ENCODE measurements at regions of chr17 and their contacts with region 1.

Region 1: DNA sequence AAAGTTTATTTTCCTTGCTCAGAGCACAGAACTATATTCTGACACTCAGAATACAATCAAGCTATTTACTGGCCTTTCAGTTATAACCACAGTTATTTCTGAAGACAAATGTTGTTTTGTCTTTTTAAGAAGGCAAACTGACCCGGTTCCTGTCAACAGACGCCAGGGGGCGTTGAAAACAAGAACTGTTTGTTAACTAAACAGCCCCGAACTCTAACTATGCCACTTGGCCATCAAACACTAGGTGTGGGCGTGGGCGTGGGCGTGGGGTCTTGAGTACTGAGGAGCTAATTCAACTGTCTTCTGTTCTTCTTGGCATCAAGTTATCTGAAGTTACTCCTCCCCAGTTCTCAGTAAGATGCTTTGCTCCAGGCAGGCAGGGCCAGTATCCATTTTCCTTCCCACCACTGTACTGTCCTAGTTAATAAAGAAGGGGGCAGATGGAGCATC is 63.2 kb upstream of the MTMR4 start:
- H3K4me3 ChIP-seq: no peak overlapping the region
- H3K27ac ChIP-seq: no peak overlapping the region
- H3K4me1 ChIP-seq: peaks cover 3% of the 10 kb centered on the region; the same call in 1 of the 2 replicates
- CTCF ChIP-seq: peak; percentile 52; the same call in 1 of the 2 replicates

Region 2: DNA sequence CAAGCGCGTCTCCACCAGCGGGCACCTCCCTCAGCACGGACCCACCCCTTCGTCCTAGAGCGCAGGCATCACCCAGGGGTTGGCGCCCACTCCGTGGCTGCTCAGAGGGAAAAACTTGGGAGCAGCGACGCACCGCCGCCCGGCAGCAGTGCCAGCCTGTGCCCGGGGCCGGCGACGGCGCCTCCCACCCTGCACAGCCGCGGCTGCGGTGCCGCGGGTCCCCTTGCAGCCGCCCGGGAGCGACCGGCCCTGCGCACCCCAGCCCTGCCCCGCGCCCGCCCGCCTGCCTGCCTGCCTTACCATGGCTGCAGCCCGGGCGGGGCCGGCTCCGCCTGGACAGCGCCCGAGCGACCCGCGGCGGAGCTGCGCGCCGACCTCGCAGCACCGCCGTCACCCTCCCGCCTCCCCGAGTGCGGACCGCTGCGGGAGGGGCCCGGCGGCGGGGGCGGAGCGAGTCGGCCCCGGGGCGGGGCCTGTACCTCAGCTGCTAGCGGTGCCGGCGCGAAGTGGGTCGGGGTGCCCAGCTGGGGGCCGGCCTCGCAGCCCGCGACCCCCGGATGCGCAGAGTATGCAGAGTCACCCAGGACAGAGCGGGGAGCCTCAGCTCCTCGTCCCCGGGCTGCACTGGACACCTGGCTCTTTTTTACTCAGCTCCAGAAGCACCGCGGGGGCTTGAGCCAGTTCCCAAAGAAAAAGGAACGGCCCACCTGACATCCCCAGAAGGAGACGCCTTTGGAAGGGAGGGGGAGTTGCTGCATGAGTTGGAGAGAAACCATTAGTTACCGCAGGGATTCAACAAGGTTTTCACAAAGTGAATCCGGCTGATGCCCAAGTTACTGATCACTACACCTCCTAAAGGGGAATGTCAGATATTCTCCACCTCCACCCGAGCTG is 45.8 kb before region 1 on chr17:
- CTCF ChIA-PET with region 1: interaction called, 10 read pairs
- POLR2A ChIA-PET with region 1: no interaction called
- H3K4me3 ChIP-seq: peak overlapping the region; percentile 45
- H3K27ac ChIP-seq: no peak overlapping the region; the same call in 1 of the 2 replicates
- H3K4me1 ChIP-seq: no peaks in the 10 kb centered on the region
- CTCF ChIP-seq: no peak; the same call in 1 of the 2 replicates

Region 3: DNA sequence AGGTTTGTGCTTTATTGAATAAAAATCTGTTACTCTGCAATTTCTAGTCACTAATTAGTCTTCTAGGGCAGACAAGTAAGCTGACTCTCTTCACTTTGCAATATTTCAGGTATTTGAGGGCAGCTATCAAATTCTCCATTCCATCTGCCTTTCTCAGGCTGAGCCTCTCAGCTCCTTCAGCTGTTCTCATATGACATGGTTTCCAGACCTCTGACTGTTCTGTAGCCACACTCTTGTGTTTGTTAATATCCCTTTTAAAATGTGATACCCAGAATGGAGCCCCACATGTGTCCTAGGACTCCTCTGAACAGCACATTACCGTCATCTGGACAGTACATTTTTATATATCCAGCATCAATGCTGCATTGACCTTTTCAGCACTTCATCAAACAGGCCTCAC is 17.2 kb before region 1 on chr17:
- CTCF ChIA-PET with region 1: interaction called, 38 read pairs
- POLR2A ChIA-PET with region 1: no interaction called
- H3K4me3 ChIP-seq: no peak overlapping the region
- H3K27ac ChIP-seq: no peak overlapping the region
- H3K4me1 ChIP-seq: no peaks in the 10 kb centered on the region; the same call in 1 of the 2 replicates
- CTCF ChIP-seq: no peak

Region 4: GRCh38 chr17:58587702-58588254 is 10.1 kb after region 1 on chr17:
- CTCF ChIA-PET with region 1: interaction called, 79 read pairs
- POLR2A ChIA-PET with region 1: no interaction called
- H3K4me3 ChIP-seq: no peak overlapping the region
- H3K27ac ChIP-seq: no peak overlapping the region
- H3K4me1 ChIP-seq: no peaks in the 10 kb centered on the region
- CTCF ChIP-seq: peak; percentile 90

Region 5: DNA sequence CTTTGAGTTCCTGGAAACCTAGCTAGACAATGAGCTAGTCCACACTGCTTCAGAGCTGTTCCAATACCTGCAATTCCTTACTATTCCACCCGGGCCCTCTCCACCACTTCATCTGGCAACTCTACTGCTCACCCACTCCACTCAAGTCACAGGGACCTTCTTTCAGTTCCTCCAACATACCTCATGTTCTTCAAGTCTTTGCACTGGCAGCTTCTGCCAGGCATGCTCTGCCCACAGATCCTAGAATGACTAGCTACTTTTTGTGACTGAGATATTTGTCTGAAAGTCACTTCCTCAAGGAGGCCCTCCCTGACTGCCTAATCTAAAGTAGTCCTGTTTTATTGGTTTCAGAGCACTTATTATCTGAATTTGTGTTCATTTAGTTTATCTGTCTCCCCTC is 27.8 kb after region 1 on chr17:
- CTCF ChIA-PET with region 1: interaction called, 12 read pairs
- POLR2A ChIA-PET with region 1: no interaction called
- H3K4me3 ChIP-seq: no peak overlapping the region
- H3K27ac ChIP-seq: no peak overlapping the region
- H3K4me1 ChIP-seq: no peaks in the 10 kb centered on the region
- CTCF ChIP-seq: no peak